ENCODE measurements at regions of chr9 and their contacts with region 1.

Region 1: DNA sequence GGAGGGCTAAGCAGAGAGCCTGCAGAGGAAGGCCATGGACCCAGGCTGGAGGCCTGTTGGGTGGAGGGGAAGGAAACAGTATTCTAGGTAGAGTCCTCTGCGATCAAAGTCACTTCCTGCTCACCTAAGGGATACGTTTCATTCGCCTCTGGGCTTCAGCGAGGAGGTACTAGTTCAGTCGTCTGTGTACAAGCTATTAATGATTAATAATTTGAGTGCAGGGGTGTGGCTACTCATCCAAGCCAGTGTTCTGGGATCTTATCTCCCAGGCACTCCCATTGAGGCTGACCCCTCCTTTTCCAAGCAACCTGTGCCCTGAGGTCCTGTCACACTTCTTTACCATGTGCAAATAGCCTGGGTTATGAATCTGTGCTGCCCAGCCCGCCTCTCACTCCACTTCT is 25.2 kb downstream of the RALGPS1 start:
- DNase-seq: peak; percentile 53 to 68 (median 62)
- ATAC-seq: peak; percentile 92 to 94 (median 93)
- H3K4me3 ChIP-seq: peak overlapping the region in 1 of 3 donors; percentile 18
- H3K27ac ChIP-seq: peak overlapping the region; percentile 20 to 47 (median 43)
- H3K4me1 ChIP-seq: peaks cover 0 to 7% (median 2%) of the 10 kb centered on the region in 4 donors
- H3K27me3 ChIP-seq: no peaks in the 10 kb centered on the region
- CTCF ChIP-seq: no peak
- POLR2A ChIP-seq: no peak

Region 2: DNA sequence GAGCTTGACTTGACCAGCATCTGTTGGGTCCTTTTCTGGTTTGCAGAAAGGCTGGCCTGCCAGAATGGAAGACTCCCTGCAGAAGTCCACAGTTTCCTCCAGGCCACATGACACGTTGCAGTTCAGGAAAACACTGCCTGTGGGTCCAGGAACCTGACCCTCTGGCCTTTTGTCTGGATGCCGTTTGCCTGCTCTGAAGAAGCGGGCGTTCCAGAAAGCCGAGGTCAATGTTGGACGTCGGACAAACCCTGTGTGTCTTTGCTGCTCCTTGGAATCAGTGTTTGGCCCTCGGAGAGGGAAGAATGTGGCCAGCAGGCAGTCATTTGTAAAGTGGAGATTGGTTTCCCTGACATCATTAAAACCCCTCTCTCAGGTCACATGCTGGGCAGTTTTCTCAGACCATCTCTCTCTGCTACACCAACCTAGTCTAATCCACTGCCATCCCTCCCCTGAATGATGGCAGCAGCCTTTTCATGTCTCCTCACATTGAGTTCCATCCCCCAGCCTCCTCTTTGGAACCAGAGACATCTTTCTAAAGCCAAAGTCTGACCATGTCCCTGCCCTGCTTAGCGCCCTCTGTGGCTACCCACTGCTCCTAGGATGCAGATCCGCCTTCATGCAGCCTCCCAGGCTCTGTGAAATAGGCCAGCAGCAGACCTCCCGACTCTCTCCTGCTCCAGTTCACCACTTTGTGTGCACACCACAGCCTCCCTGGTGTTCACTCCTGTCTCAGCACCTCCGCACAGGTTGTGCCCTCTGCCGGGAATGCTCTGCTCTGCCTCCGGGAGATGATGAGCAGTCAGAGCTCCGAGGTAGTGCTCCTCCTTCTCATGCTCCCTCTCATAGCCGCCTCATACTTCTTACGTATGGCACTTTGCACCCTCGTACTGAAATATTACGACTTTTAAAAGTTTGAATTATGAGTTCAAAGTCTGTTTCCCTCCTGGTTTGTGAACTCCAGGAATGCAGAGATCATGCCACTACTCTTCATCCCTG is 50.3 kb after region 1 on chr9:
- intact Hi-C with region 1: no loop called
- DNase-seq: no peak
- ATAC-seq: peak in 3 of 4 donors; percentile 26 to 51 (median 47)
- H3K4me3 ChIP-seq: no peak overlapping the region
- H3K27ac ChIP-seq: no peak overlapping the region
- H3K4me1 ChIP-seq: no peaks in the 10 kb centered on the region
- H3K27me3 ChIP-seq: no peaks in the 10 kb centered on the region
- CTCF ChIP-seq: no peak
- POLR2A ChIP-seq: no peak

Region 3: GRCh38 chr9:127199001-127199791 is 259.4 kb after region 1 on chr9:
- intact Hi-C with region 1: loop called (anchors 5 to 10 kb)
- DNase-seq: peak in 2 of 3 donors; percentile 58 to 69
- ATAC-seq: peak; percentile 80 to 92 (median 84)
- H3K4me3 ChIP-seq: no peak overlapping the region
- H3K27ac ChIP-seq: no peak overlapping the region
- H3K4me1 ChIP-seq: no peaks in the 10 kb centered on the region
- H3K27me3 ChIP-seq: no peaks in the 10 kb centered on the region
- CTCF ChIP-seq: peak; percentile 83 to 96 (median 86)
- POLR2A ChIP-seq: no peak

Region 4: GRCh38 chr9:127205183-127205470 is 265.3 kb after region 1 on chr9:
- intact Hi-C with region 1: loop called in 1 of 2 experiments (anchors 10 kb)
- DNase-seq: no peak
- ATAC-seq: peak in 3 of 4 donors; percentile 3 to 44 (median 39)
- H3K4me3 ChIP-seq: no peak overlapping the region
- H3K27ac ChIP-seq: no peak overlapping the region
- H3K4me1 ChIP-seq: no peaks in the 10 kb centered on the region
- H3K27me3 ChIP-seq: no peaks in the 10 kb centered on the region
- CTCF ChIP-seq: peak; percentile 9 to 33 (median 24)
- POLR2A ChIP-seq: no peak